CD4-positive, alpha-beta memory T cell (primary cell): ENCODE measurements at regions of chr16 and their contacts with region 1.

Region 1: GRCh38 chr16:84084570-84085270 is 32.0 kb downstream of the MBTPS1 start:
- DNase-seq: peak; percentile 64 to 76 (median 67)
- H3K4me3 ChIP-seq: no peak overlapping the region
- H3K4me3 Mint-ChIP-seq: peak overlapping the region in 4 of 8 donors; percentile 13 to 39 (median 18)
- H3K27ac ChIP-seq: no peak overlapping the region
- H3K27ac Mint-ChIP-seq: peak overlapping the region in 5 of 7 donors; percentile 19 to 64 (median 55)
- H3K4me1 ChIP-seq: peaks cover 29% of the 10 kb centered on the region
- H3K4me1 Mint-ChIP-seq: peaks cover 29 to 52% (median 35%) of the 10 kb centered on the region in 4 donors
- H3K27me3 ChIP-seq: no peaks in the 10 kb centered on the region
- H3K27me3 Mint-ChIP-seq: no peaks in the 10 kb centered on the region

Region 2: GRCh38 chr16:84065536-84066132 is 19.1 kb before region 1 on chr16:
- CTCF ChIA-PET with region 1: interaction called, 40 read pairs
- POLR2A ChIA-PET with region 1: no interaction called
- intact Hi-C with region 1: no loop called
- DNase-seq: peak in 2 of 5 donors; percentile 5 to 15
- H3K4me3 ChIP-seq: no peak overlapping the region
- H3K4me3 Mint-ChIP-seq: no peak overlapping the region
- H3K27ac ChIP-seq: no peak overlapping the region
- H3K27ac Mint-ChIP-seq: no peak overlapping the region
- H3K4me1 ChIP-seq: no peaks in the 10 kb centered on the region
- H3K4me1 Mint-ChIP-seq: peaks cover 0 to 6% (median 4%) of the 10 kb centered on the region in 4 donors
- H3K27me3 ChIP-seq: no peaks in the 10 kb centered on the region
- H3K27me3 Mint-ChIP-seq: no peaks in the 10 kb centered on the region

Region 3: GRCh38 chr16:84096115-84097012 is 11.6 kb after region 1 on chr16:
- CTCF ChIA-PET with region 1: interaction called, 18 read pairs
- POLR2A ChIA-PET with region 1: no interaction called
- intact Hi-C with region 1: no loop called
- DNase-seq: no peak
- H3K4me3 ChIP-seq: no peak overlapping the region
- H3K4me3 Mint-ChIP-seq: no peak overlapping the region
- H3K27ac ChIP-seq: no peak overlapping the region
- H3K27ac Mint-ChIP-seq: peak overlapping the region in 1 of 7 donors; percentile 22
- H3K4me1 ChIP-seq: peaks cover 5% of the 10 kb centered on the region
- H3K4me1 Mint-ChIP-seq: peaks cover 0 to 15% (median 7%) of the 10 kb centered on the region in 4 donors
- H3K27me3 ChIP-seq: no peaks in the 10 kb centered on the region
- H3K27me3 Mint-ChIP-seq: no peaks in the 10 kb centered on the region

Region 4: GRCh38 chr16:84109598-84110325 is 25.0 kb after region 1 on chr16:
- CTCF ChIA-PET with region 1: interaction called, 25 read pairs
- POLR2A ChIA-PET with region 1: no interaction called
- intact Hi-C with region 1: no loop called
- DNase-seq: no peak
- H3K4me3 ChIP-seq: no peak overlapping the region
- H3K4me3 Mint-ChIP-seq: no peak overlapping the region
- H3K27ac ChIP-seq: no peak overlapping the region
- H3K27ac Mint-ChIP-seq: peak overlapping the region in 1 of 7 donors; percentile 0
- H3K4me1 ChIP-seq: peaks cover 42% of the 10 kb centered on the region
- H3K4me1 Mint-ChIP-seq: peaks cover 40 to 65% (median 52%) of the 10 kb centered on the region in 4 donors
- H3K27me3 ChIP-seq: no peaks in the 10 kb centered on the region
- H3K27me3 Mint-ChIP-seq: no peaks in the 10 kb centered on the region

Region 5: DNA sequence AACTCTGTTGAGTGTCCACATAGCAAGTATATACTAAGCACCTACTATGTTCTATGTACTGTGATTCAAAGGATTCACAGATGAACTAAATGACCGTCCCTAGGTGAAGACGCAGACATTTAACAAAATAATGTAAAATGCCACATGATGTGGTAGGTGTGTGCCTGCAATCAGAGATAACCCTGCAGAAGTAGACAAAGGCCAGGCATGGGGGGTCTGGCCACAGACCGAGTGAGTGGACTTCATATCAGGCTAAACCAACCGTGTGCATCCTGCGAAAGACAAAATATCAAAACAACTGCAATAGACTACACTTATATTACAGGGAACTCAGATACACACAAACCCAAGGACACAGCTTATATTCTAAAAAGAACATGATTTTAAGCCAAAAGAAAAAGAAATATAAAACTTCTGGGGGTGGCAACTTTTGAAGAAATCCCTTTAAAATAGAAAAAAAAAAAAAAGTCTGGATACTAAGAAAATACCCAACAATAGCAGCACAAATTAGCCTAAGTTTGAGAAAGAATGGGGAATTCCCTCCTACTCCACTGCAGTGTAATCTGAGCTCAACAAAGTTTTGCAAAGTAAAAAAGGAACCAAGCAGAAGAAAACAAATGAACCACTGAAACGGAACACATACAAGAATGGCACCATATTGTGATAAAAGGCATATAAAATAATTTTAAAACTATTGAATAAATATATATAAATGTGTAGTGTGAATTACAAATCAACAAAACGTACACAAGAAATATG is 48.0 kb after region 1 on chr16:
- CTCF ChIA-PET with region 1: no interaction called
- POLR2A ChIA-PET with region 1: no interaction called
- intact Hi-C with region 1: no loop called
- DNase-seq: no peak
- H3K4me3 ChIP-seq: no peak overlapping the region
- H3K4me3 Mint-ChIP-seq: no peak overlapping the region
- H3K27ac ChIP-seq: no peak overlapping the region
- H3K27ac Mint-ChIP-seq: no peak overlapping the region
- H3K4me1 ChIP-seq: no peaks in the 10 kb centered on the region
- H3K4me1 Mint-ChIP-seq: peaks cover 0 to 5% (median 1%) of the 10 kb centered on the region in 4 donors
- H3K27me3 ChIP-seq: no peaks in the 10 kb centered on the region
- H3K27me3 Mint-ChIP-seq: no peaks in the 10 kb centered on the region

Region 6: DNA sequence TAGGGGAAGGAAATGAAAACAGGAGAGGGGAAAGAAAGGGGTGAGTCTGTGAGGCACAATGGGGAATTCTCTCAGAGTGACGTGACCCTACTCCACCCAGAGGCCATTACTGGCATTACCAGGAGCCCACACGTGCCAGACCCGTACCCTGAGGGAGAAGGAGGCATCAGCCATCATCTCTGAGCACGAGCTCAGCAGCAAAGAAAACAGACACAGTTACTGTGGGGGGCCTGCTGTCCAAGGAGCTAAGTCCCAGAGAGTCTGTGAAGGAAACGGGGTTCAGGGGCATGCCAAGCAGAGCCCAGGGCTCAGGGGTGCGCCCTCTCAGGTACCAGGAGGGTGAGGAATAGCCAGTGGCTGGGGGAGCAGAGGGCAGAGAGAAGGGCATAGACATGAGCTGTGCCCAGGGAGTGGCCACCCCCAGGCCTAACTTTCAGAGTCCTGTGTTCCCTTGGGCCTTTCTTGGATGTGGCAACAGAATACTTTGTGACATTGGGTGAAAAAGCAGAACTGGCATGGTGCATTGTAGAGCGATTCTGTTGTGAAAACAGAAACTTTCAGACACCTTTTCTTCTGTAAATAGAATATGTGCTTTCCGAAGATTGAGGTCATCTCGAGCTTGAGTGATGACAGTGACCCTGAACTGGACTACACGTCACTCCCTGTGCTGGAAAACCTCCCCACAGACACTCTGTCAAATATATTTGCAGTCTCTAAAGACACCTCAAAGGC is 90.8 kb after region 1 on chr16:
- CTCF ChIA-PET with region 1: interaction called, 78 read pairs
- POLR2A ChIA-PET with region 1: interaction called, 5 read pairs
- intact Hi-C with region 1: loop called (anchors 1 kb)
- DNase-seq: peak; percentile 35 to 59 (median 45)
- H3K4me3 ChIP-seq: no peak overlapping the region
- H3K4me3 Mint-ChIP-seq: no peak overlapping the region
- H3K27ac ChIP-seq: no peak overlapping the region
- H3K27ac Mint-ChIP-seq: peak overlapping the region in 2 of 7 donors; percentile 9 to 59
- H3K4me1 ChIP-seq: no peaks in the 10 kb centered on the region
- H3K4me1 Mint-ChIP-seq: peaks cover 0 to 6% (median 5%) of the 10 kb centered on the region in 4 donors
- H3K27me3 ChIP-seq: no peaks in the 10 kb centered on the region
- H3K27me3 Mint-ChIP-seq: peaks cover 0 to 2% of the 10 kb centered on the region in 2 donors

Region 7: GRCh38 chr16:84186685-84187437 is 102.1 kb after region 1 on chr16 and contains the start of gene TAF1C:
- CTCF ChIA-PET with region 1: interaction called, 55 read pairs
- POLR2A ChIA-PET with region 1: interaction called, 5 read pairs
- intact Hi-C with region 1: loop called (anchors 1 kb)
- DNase-seq: peak; percentile 83 to 88 (median 86)
- H3K4me3 ChIP-seq: peak within 1 kb of the TSS; percentile 90 to 98
- H3K4me3 Mint-ChIP-seq: peak within 1 kb of the TSS; percentile 91 to 95 (median 93)
- H3K27ac ChIP-seq: peak within 1 kb of the TSS; percentile 71
- H3K27ac Mint-ChIP-seq: peak within 1 kb of the TSS; percentile 77 to 97 (median 94)
- H3K4me1 ChIP-seq: peaks cover 19% of the 10 kb centered on the region
- H3K4me1 Mint-ChIP-seq: peaks cover 10 to 32% (median 21%) of the 10 kb centered on the region in 4 donors
- H3K27me3 ChIP-seq: no peaks in the 10 kb centered on the region
- H3K27me3 Mint-ChIP-seq: no peaks in the 10 kb centered on the region
- total RNA-seq, gene TAF1C: 91.5 to 102 TPM